Psoas muscle (tissue), 8 donors: ENCODE measurements at regions of chr19 and their contacts with region 1.

Region 1: DNA sequence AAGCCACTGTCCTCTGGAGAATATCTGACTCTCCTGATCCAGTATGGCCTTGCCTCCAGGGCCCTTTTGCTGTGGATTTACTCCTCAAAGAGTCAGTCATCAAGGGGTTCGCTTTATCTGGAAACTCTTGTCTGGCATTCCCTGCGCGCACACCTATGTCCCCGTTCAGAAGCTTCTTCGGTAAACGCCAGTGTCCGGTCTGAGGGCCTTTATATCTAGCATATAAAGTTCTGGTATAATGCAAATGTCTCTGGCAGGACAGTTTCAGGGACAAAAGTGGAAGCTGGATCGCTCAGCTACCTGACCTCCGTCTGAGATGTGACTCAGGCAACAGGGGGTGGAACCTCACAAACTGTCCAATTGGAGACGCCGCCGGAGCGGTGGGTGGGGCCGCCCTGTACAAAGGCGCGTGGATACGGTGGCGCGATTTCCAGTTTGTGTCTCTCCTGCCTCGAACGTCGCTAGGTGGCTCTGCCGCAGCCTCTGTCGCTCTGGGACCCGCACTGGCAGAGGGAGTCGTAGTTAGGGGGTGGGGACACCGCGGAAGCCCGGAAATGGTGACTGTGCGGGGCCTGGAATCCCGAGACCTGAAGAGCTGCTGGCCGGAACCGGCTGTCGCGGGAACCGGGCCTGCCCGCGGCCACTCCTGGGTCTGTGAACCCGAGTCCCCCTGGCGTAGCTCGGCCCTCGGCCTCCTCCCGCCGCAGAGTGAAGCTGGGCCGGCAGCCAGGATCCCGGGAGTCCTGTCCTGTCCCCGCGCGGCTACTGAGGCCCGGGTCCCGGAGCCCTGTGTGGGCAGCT is 10.6 kb upstream of the ZNF709 start:
- DNase-seq: peak; percentile 92 to 96
- ATAC-seq: peak; percentile 100
- H3K4me3 ChIP-seq: peak overlapping the region; percentile 73
- H3K27ac ChIP-seq: peak overlapping the region; percentile 79
- H3K4me1 ChIP-seq: peaks cover 5% of the 10 kb centered on the region
- H3K27me3 ChIP-seq: no peaks in the 10 kb centered on the region
- CTCF ChIP-seq: peak; percentile 39

Region 2: GRCh38 chr19:11293433-11294389 is 1201.5 kb before region 1 on chr19:
- intact Hi-C with region 1: no loop called
- DNase-seq: peak; percentile 95
- ATAC-seq: peak; percentile 93 to 96 (median 94)
- H3K4me3 ChIP-seq: peak overlapping the region; percentile 34
- H3K27ac ChIP-seq: peak overlapping the region; percentile 21
- H3K4me1 ChIP-seq: no peaks in the 10 kb centered on the region
- H3K27me3 ChIP-seq: peaks cover 0 to 40% (median 1%) of the 10 kb centered on the region in 3 donors
- CTCF ChIP-seq: peak; percentile 90

Region 3: GRCh38 chr19:12425236-12425887 is 69.8 kb before region 1 on chr19:
- intact Hi-C with region 1: no loop called
- DNase-seq: no peak
- ATAC-seq: no peak
- H3K4me3 ChIP-seq: no peak overlapping the region
- H3K27ac ChIP-seq: no peak overlapping the region
- H3K4me1 ChIP-seq: no peaks in the 10 kb centered on the region
- H3K27me3 ChIP-seq: no peaks in the 10 kb centered on the region
- CTCF ChIP-seq: no peak

Region 4: GRCh38 chr19:12440541-12441316 is 54.5 kb before region 1 on chr19 and contains the start of gene ZNF443:
- intact Hi-C with region 1: loop called in 1 of 2 experiments (anchors 10 kb)
- DNase-seq: peak; percentile 99
- ATAC-seq: peak; percentile 99 to 100 (median 100)
- H3K4me3 ChIP-seq: peak within 1 kb of the TSS; percentile 73
- H3K27ac ChIP-seq: peak within 1 kb of the TSS; percentile 69
- H3K4me1 ChIP-seq: no peaks in the 10 kb centered on the region
- H3K27me3 ChIP-seq: no peaks in the 10 kb centered on the region
- CTCF ChIP-seq: no peak
- total RNA-seq, gene ZNF443: 1.1 to 2.3 (median 1.2) TPM